ENCODE measurements at regions of chr1 and their contacts with region 1.

Region 1: DNA sequence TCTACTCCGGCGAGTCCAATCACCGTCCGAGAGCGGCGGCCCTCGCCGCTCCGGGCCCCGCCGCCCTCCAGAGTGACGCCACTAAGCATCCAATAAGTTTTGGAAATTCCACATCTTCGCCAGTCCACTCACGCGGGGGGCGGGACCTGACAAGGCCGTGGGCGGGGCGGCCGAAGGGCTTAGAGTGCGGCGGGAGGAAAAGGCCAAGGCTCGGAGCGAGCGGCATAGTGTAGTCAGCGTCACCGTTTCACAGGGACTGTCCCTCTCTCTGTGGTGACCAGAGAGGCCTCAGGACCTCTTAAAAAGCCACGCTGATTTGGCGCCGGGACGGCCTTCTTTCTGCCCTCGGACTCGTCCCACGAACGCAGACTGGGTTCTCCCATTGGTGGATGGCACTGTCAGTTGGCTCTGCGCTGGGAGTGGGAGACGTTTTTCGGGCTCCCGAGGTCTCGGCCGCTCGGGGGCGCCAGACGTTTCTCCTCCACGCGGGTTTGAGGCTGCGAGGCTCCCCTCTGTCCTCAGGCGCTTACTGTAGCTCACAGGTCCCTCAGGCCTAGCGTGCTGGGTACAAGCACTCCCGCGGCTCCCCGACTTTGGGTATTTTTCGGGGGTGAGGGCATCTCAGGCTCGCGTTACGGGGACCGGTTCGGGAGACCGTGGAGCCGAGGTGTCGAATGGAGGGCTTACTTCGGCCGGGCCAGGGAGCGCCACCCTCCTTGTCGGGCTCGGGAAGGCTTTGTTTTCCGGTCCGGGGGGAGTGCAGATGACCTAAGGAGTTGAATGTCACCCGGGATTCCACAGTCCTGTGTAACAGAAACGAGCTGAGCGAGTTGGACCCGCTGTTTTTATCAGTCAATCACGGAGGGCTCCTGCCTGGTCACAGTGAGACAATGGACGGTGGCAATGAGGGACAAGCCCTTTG is 488 bp upstream of the TRIM45 start:
- DNase-seq: peak; percentile 97 to 98
- H3K4me3 ChIP-seq: peak overlapping the region; percentile 79 to 80
- H3K27ac ChIP-seq: peak overlapping the region; percentile 89
- H3K4me1 ChIP-seq: peaks cover 13% of the 10 kb centered on the region
- H3K27me3 ChIP-seq: no peaks in the 10 kb centered on the region
- CTCF ChIP-seq: peak; percentile 17 to 63 (median 51)
- POLR2A ChIP-seq: no peak

Region 2: DNA sequence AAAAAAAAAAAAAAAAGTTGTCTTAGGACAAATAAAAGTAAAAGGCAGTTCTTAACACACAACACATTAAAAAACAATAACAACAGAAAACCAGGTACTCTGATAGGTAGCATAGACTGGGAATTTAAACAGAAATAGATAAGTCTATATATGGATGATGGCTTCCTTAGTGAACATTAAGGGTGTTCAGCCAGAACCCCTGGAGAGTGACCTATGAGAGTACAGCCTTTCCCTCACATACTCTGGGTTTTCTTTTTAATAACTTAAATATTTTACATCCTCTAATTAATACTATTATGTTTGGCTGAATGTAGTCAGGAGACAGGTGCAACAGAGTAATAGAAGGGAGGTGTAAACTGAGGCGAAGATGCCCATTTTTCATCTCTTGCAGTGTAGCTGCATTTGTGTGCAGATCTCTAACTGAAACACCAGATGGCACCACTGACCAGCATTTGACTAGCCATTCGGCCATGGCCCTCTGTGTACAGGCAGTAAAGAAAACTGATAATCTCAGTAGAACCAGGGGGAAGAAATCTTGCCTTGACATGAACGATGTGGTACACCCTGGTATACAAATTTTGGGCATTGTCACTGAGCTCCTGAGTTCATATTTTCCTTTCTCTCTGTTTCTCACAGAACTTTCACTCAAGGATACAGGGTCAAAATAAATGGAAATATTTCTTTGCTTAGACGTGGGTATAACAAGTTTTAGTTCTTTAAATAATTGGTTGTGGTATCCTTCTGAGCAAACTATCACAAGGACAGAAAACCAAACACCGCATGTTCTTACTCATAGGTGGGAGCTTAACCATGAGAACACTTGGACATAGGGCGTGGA is 54.3 kb before region 1 on chr1:
- intact Hi-C with region 1: loop called (anchors 5 kb)
- DNase-seq: no peak
- H3K4me3 ChIP-seq: no peak overlapping the region
- H3K27ac ChIP-seq: no peak overlapping the region
- H3K4me1 ChIP-seq: no peaks in the 10 kb centered on the region
- H3K27me3 ChIP-seq: no peaks in the 10 kb centered on the region
- CTCF ChIP-seq: peak; percentile 63 to 74 (median 72)
- POLR2A ChIP-seq: no peak

Region 3: GRCh38 chr1:117284399-117285215 is 162.6 kb after region 1 on chr1:
- intact Hi-C with region 1: loop called (anchors 5 kb)
- DNase-seq: no peak
- H3K4me3 ChIP-seq: no peak overlapping the region
- H3K27ac ChIP-seq: no peak overlapping the region
- H3K4me1 ChIP-seq: no peaks in the 10 kb centered on the region
- H3K27me3 ChIP-seq: no peaks in the 10 kb centered on the region
- CTCF ChIP-seq: peak; percentile 20 to 39 (median 28)
- POLR2A ChIP-seq: no peak